Spleen (tissue), 13 donors: ENCODE measurements at regions of chr7 and their contacts with region 1.

Region 1: GRCh38 chr7:44748045-44748947 is at the start of gene ZMIZ2:
- DNase-seq: peak; percentile 99
- H3K4me3 ChIP-seq: peak within 1 kb of the TSS; percentile 73 to 91 (median 80)
- H3K27ac ChIP-seq: peak within 1 kb of the TSS; percentile 98 to 100 (median 99)
- H3K4me1 ChIP-seq: peaks cover 37 to 53% (median 48%) of the 10 kb centered on the region in 6 donors
- H3K27me3 ChIP-seq: no peaks in the 10 kb centered on the region
- CTCF ChIP-seq: no peak
- POLR2A ChIP-seq: peak in 1 of 3 donors; percentile 43
- total RNA-seq, gene ZMIZ2: 35.6 to 160 (median 125) TPM

Region 2: DNA sequence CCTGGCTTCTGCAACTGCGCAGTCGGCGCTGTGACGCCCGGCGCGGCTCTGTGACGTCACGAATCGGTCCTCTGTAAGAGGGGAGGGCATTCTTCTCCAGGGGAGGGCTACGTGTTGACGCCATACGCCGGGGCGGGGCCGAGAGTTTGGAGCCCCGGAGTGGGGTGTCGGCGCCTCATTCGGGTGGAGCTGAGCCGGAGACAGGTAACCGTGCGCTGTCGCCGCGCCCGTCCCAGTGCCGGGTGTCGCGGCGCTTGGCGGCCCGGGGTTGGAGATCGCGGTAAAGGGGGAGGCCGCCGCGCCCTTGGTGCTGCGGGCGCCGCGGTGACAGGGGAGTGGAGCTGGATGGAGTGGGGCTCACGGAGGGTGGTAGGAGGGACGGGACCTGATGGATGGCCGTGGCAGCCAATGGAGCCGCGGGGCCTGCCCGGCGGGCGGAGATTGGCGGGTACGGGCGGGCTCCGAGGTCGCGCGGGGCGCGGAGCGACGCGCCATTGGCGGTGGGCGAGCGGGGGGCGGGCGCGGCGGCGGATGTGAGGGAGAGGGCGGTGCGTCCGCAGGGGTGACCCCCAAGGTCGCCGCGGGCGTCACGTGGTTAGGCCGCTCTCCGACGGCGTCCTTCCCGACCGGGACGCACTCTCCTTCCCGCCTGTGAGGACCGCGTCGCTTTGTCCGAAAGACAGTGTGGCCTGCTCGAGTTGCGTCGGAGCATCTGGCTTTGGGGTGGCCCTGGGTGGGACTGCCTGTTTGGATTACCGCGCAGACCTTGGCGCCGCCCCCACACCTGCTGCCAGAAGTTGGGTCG is 141.6 kb before region 1 on chr7 and contains the start of gene OGDH:
- intact Hi-C with region 1: loop called (anchors 10 kb)
- DNase-seq: peak; percentile 100
- H3K4me3 ChIP-seq: peak within 1 kb of the TSS; percentile 58 to 86 (median 68)
- H3K27ac ChIP-seq: peak within 1 kb of the TSS; percentile 97 to 100 (median 99)
- H3K4me1 ChIP-seq: peaks cover 26 to 64% (median 49%) of the 10 kb centered on the region in 6 donors
- H3K27me3 ChIP-seq: no peaks in the 10 kb centered on the region
- CTCF ChIP-seq: peak in 2 of 11 experiments; percentile 5 to 20
- POLR2A ChIP-seq: peak in 1 of 3 donors; percentile 16
- total RNA-seq, gene OGDH: 78.2 to 120 (median 91.6) TPM

Region 3: DNA sequence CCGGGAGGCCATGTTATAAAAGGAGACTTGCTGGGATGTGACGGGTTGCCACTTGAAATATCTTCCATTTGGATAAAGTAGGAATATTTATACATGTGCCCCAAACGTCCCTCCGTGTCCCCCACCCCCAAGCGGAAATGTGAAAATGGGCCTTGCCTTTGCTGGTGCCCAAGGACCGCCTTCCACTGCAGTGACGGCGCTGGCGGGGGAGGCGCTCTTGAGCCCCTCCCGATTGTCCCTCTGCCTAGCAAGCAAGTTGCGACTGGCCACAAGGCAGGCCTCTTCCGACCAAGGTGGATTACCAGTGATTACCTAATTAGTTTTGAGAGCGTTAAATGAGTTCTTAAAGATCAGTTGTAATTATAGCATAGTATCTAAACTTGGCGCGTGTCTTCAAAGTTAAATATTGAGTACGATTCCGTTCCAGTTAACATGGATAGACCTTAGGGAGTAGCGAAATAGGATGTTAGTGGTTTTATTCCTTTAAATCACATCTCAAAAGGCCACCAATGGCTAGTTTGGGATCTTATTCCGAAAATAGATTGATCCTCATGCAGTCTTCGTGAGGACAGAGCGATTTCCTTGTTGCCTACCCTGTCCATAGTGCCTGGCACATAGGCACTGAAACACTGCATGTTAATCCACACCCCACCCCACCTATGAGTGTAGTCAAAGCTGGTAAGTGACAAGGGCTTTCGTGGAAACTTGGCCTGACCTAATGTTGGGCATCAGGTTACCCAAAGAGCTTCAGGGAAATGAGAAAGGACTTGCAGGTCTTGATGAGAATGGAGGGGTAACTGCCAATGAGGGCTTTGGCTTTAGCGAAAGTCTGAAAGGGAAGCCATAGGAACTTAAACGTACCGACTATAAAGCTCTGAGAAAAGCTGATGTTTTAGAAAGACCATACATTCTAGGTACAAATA is 49.3 kb after region 1 on chr7:
- intact Hi-C with region 1: loop called (anchors 5 kb)
- DNase-seq: peak; percentile 97
- H3K4me3 ChIP-seq: peak overlapping the region; percentile 73 to 98 (median 84)
- H3K27ac ChIP-seq: peak overlapping the region; percentile 97 to 100 (median 99)
- H3K4me1 ChIP-seq: peaks cover 22 to 50% (median 39%) of the 10 kb centered on the region in 6 donors
- H3K27me3 ChIP-seq: no peaks in the 10 kb centered on the region
- CTCF ChIP-seq: peak in 10 of 11 experiments; percentile 24 to 78 (median 58)
- POLR2A ChIP-seq: peak in 1 of 3 donors; percentile 20